ENCODE measurements at regions of chr11 and their contacts with region 1.

Region 1: DNA sequence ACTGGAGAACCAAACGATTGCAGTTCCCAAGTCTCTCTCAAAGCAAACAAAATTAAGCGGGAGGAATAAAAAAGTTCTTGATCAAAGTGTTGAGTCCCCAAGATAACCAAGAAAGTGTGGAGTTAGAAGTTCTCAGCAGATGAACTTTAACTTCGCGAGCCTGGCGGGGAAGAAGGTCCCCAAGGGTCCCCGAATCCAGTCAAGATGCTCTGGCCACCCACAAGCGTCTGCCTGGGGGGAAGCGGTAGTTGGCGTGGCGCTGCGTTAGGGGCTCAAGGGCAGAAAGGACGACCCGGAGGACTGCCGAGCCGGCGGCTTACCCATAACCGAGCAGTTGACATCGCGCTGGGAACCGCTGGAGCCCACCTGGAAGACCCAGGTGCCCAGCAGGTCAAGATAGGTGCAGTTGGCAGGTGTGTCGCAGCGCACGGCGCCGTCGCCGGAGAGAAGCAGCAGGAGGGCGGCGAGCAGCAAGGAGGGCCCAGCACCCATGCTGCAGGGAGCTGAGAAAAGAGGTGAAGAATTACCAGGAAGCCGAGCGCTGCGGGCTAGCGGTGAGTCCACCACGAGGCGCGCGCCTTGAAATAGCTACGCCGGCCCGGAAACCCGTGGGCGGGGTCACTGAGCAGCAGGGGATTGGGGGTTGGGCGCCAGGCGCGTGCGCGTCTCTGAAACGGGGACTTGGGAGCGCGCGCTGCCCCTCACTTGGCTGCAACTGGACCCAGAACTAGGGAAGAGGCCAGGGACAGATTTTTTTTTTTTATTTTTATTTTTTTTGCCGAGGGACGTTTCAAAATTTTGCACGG is at the start of gene CTSC:
- DNase-seq: peak; percentile 96
- H3K4me3 ChIP-seq: peak within 1 kb of the TSS; percentile 92
- H3K27ac ChIP-seq: peak within 1 kb of the TSS; percentile 82
- H3K4me1 ChIP-seq: peaks cover 38% of the 10 kb centered on the region
- CTCF ChIP-seq: no peak
- total RNA-seq, gene CTSC: 60.5 and 78.2 TPM in 2 replicates

Region 2: GRCh38 chr11:87037450-87038234 is 1299.7 kb before region 1 on chr11 and contains the start of gene TMEM135:
- CTCF ChIA-PET with region 1: no interaction called
- POLR2A ChIA-PET with region 1: no interaction called
- intact Hi-C with region 1: loop called (anchors 5 kb)
- DNase-seq: peak; percentile 97
- H3K4me3 ChIP-seq: peak within 1 kb of the TSS; percentile 79
- H3K27ac ChIP-seq: peak within 1 kb of the TSS; percentile 54
- H3K4me1 ChIP-seq: peaks cover 27% of the 10 kb centered on the region
- CTCF ChIP-seq: peak; percentile 23; the same call in 1 of the 2 replicates
- total RNA-seq, gene TMEM135: 9.4 and 14.5 TPM in 2 replicates

Region 3: DNA sequence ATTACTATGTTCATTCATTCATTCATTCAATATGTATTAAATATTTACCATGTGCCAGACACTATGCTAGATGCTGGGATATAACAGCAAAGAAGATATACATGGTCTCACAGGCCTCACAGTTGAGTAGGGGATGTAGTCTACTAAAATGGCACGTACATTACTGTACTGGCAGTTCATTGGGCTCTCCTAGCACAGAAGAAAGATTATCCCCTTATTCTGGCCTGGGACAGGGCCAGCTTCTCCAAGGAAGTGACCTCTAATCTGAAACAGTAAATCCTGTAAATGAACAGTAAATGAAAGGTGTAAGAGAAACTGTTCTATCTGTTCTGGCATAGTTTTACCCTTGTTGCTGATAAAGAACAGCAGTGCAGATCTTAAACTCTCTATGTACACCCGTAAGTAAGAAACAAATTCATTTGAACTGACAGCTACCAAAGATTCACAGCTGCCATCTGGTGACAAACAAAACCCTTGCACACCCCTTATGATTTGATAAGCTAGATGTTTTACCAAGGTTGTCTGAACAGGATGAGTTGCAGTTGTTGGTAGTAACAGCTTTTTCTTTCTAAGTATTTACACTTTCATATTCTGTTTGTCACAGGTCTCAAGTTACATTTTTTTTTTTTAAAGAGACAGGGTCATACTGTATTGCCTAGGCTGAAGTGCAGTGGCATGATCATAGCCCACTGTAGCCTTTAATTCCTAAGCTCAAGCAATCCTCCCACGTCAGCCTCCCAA is 1036.6 kb before region 1 on chr11:
- CTCF ChIA-PET with region 1: no interaction called
- POLR2A ChIA-PET with region 1: no interaction called
- intact Hi-C with region 1: loop called (anchors 10 kb)
- DNase-seq: peak; percentile 22
- H3K4me3 ChIP-seq: no peak overlapping the region
- H3K27ac ChIP-seq: peak overlapping the region; percentile 25
- H3K4me1 ChIP-seq: peaks cover 48% of the 10 kb centered on the region
- CTCF ChIP-seq: peak; percentile 31

Region 4: DNA sequence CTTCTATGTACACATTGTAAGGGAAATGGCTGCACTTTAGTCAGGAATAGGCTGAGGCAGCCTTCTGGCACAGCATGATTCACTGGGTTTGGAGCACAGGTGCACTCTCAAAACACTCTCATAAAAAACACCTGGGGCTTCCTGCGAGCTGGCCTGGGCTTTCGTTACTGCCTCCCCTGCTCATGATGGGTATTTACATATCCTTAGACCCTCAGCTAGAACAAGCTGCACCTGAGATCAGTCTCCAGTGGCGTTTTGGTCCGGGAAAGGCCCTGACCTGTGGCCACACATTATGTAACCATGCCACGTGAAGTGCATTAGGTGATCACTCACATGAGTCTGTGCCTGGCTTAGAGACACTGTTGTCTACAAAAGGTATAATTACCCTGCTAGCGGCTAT is 978.0 kb before region 1 on chr11:
- CTCF ChIA-PET with region 1: interaction called, 3 read pairs
- POLR2A ChIA-PET with region 1: no interaction called
- intact Hi-C with region 1: loop called (anchors 5 kb)
- DNase-seq: peak; percentile 89
- H3K4me3 ChIP-seq: peak overlapping the region; percentile 65
- H3K27ac ChIP-seq: peak overlapping the region; percentile 92
- H3K4me1 ChIP-seq: peaks cover 95% of the 10 kb centered on the region
- CTCF ChIP-seq: no peak

Region 5: GRCh38 chr11:87454241-87454640 is 883.1 kb before region 1 on chr11:
- CTCF ChIA-PET with region 1: no interaction called
- POLR2A ChIA-PET with region 1: interaction called, 3 read pairs
- intact Hi-C with region 1: loop called (anchors 5 kb)
- DNase-seq: peak; percentile 91
- H3K4me3 ChIP-seq: peak overlapping the region; percentile 55
- H3K27ac ChIP-seq: peak overlapping the region; percentile 96
- H3K4me1 ChIP-seq: peaks cover 82% of the 10 kb centered on the region
- CTCF ChIP-seq: no peak

Region 6: GRCh38 chr11:88327061-88327460 is 10.3 kb before region 1 on chr11:
- CTCF ChIA-PET with region 1: interaction called, 4 read pairs
- POLR2A ChIA-PET with region 1: interaction called, 25 read pairs
- intact Hi-C with region 1: no loop called
- DNase-seq: no peak
- H3K4me3 ChIP-seq: no peak overlapping the region
- H3K27ac ChIP-seq: no peak overlapping the region
- H3K4me1 ChIP-seq: peaks cover 25% of the 10 kb centered on the region
- CTCF ChIP-seq: no peak

Region 7: DNA sequence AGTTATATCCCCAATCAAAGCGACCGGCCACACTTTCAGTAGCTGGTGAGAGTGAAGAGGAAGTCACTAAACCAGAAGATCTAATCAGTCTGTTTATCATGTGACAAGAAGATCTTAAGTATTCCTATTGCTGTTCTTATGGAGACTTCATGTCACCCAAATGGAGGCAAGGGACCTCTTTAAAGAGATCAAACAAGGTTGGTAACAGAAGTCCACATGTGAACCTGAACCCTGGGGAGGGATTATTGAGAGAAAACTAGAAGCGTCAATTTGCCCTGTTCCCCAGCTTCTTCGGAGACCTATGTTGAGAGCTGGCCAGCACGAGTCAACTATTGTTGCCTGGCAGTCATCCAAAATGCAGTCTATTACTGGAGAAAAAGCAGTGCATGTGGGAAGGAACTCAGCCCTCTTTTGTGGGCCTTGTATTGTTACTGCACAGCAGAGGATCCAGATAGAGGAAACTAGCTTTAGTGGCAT is 77.0 kb after region 1 on chr11:
- CTCF ChIA-PET with region 1: no interaction called
- POLR2A ChIA-PET with region 1: no interaction called
- intact Hi-C with region 1: no loop called
- DNase-seq: no peak
- H3K4me3 ChIP-seq: no peak overlapping the region
- H3K27ac ChIP-seq: no peak overlapping the region
- H3K4me1 ChIP-seq: no peaks in the 10 kb centered on the region
- CTCF ChIP-seq: no peak

Region 8: GRCh38 chr11:88435189-88435814 is 97.9 kb after region 1 on chr11:
- CTCF ChIA-PET with region 1: no interaction called
- POLR2A ChIA-PET with region 1: no interaction called
- intact Hi-C with region 1: no loop called
- DNase-seq: no peak
- H3K4me3 ChIP-seq: no peak overlapping the region
- H3K27ac ChIP-seq: no peak overlapping the region
- H3K4me1 ChIP-seq: no peaks in the 10 kb centered on the region
- CTCF ChIP-seq: no peak

Region 9: DNA sequence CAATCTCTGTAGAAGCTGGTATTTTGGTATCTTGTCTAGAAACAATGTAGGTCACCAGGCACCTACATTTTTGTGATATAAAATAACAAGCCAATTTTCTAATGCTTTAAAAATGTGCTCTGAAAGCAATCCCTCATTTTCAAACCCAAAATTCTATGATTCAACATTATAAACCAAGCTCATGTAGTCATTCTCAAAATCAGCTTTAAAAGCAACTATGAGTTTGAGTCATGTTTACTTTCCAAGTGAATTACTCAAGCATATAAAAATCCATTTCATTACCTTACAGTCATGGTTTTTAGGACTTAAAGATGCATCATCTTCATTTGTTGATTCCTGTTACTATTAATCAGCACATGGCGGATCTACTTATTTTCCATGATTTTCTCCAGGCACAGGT is 512.0 kb after region 1 on chr11:
- CTCF ChIA-PET with region 1: no interaction called
- POLR2A ChIA-PET with region 1: interaction called, 6 read pairs
- intact Hi-C with region 1: loop called (anchors 5 kb)
- DNase-seq: no peak
- H3K4me3 ChIP-seq: no peak overlapping the region
- H3K27ac ChIP-seq: no peak overlapping the region
- H3K4me1 ChIP-seq: peaks cover 27% of the 10 kb centered on the region
- CTCF ChIP-seq: no peak